ENCODE measurements at regions of chr17 and their contacts with region 1.

Region 1: GRCh38 chr17:73956669-73957465 is 246.6 kb upstream of the RPL38 start:
- DNase-seq: peak; percentile 18 to 65 (median 49)
- ATAC-seq: peak; percentile 70
- H3K4me3 ChIP-seq: no peak overlapping the region
- H3K4me3 Mint-ChIP-seq: no peak overlapping the region
- H3K27ac ChIP-seq: no peak overlapping the region
- H3K27ac Mint-ChIP-seq: no peak overlapping the region
- H3K4me1 ChIP-seq: no peaks in the 10 kb centered on the region
- H3K4me1 Mint-ChIP-seq: peaks cover 0 to 4% (median 0%) of the 10 kb centered on the region in 7 donors
- H3K27me3 ChIP-seq: no peaks in the 10 kb centered on the region
- H3K27me3 Mint-ChIP-seq: peaks cover 3 to 7% (median 4%) of the 10 kb centered on the region in 5 donors

Region 2: GRCh38 chr17:74008196-74008595 is 51.3 kb after region 1 on chr17:
- CTCF ChIA-PET with region 1: no interaction called
- POLR2A ChIA-PET with region 1: no interaction called
- intact Hi-C with region 1: loop called in 1 of 2 experiments (anchors 2 kb)
- DNase-seq: peak in 4 of 9 donors; percentile 9 to 19 (median 16)
- ATAC-seq: peak; percentile 42
- H3K4me3 ChIP-seq: no peak overlapping the region
- H3K4me3 Mint-ChIP-seq: no peak overlapping the region
- H3K27ac ChIP-seq: no peak overlapping the region
- H3K27ac Mint-ChIP-seq: peak overlapping the region in 1 of 9 donors; percentile 14
- H3K4me1 ChIP-seq: peaks cover 0 to 8% of the 10 kb centered on the region in 2 donors
- H3K4me1 Mint-ChIP-seq: peaks cover 10 to 31% (median 15%) of the 10 kb centered on the region in 7 donors
- H3K27me3 ChIP-seq: no peaks in the 10 kb centered on the region
- H3K27me3 Mint-ChIP-seq: peaks cover 3 to 34% (median 10%) of the 10 kb centered on the region in 5 donors

Region 3: DNA sequence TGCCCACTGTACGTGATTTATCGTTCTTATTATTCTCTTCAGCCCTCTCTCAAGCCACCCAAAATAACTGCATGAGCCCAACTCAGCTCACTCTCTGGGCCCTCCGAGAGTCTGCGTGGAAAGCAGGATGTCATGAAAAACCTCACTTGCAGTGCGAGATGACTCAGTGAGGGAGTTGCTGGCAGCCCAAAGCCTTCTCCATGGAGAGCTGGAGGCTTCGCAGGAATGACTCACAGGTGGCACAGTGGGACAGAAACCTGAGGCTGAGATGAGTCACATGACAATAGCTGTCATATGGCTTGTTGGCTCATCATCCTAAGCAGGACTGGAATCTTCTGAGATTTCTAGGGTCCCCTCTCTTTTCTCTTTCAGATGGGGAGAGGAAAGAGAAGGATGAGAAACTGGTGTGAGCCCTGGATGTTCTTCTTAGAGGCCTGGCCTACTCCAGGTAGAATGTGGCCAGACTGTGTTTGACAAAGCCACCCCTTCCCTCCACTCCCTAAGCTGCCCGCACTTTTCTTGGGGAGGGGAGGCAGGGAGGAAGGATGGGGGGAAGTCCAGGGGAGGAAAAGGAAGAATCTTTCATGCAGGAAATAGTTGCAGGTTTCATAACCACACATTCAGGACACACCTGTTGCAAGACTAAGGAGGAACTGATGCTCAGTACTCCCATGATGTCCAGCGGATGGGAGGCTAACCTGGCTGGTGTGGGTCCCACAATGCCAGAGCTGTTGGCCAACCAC is 86.0 kb after region 1 on chr17:
- CTCF ChIA-PET with region 1: no interaction called
- POLR2A ChIA-PET with region 1: no interaction called
- intact Hi-C with region 1: no loop called
- DNase-seq: peak in 1 of 9 donors; percentile 28
- ATAC-seq: no peak
- H3K4me3 ChIP-seq: no peak overlapping the region
- H3K4me3 Mint-ChIP-seq: no peak overlapping the region
- H3K27ac ChIP-seq: no peak overlapping the region
- H3K27ac Mint-ChIP-seq: no peak overlapping the region
- H3K4me1 ChIP-seq: no peaks in the 10 kb centered on the region
- H3K4me1 Mint-ChIP-seq: peaks cover 0 to 2% (median 0%) of the 10 kb centered on the region in 7 donors
- H3K27me3 ChIP-seq: no peaks in the 10 kb centered on the region
- H3K27me3 Mint-ChIP-seq: peaks cover 2 to 10% (median 3%) of the 10 kb centered on the region in 5 donors